Caco-2 (cell line): ENCODE measurements at regions of chr10 and their contacts with region 1.

Region 1: DNA sequence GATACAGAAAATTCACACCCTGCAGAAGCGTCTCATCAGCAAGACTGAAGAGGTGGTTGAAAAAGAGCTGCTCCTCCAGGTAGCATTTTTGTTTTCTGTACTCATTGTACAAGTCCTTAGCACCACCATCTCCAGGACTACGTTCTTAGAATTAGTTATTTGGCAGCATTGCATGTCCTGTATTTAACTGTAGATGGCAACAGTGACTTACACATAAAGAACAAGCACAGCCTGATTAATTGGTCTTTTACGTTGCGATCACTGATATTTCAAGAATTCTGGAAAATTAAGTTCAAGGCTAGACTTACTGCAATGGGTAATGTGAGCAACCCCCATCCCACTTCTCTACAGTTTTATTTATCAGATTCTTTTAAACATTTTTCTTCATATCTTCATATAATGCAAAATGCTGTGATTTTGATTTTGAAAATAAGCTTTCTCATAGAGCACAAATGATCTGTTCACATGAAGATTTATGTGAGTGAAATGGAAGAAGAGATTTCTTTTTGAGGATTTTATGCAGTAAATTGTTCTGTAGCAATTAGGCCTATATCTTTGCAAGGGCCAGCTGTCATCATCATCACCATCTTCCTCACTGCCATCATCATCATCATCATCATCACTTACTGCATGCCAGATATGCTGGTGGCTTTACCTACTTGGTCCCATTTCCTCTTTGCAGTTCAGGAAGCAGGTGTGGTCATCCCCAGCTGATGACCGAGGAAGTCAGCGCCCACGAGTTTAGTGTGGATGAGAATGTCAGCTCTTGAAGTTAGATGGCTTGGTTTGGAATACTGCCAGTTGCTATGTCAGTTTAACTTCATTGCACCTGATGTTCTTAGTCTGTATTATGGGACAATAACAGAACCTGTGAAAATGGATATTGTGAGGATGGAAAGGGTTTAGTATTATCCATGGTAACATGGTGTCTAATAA is 53.4 kb downstream of the CFAP58 start:
- DNase-seq: peak in 1 of 2 experiments; percentile 9
- H3K4me3 ChIP-seq: no peak overlapping the region
- H3K4me3 Mint-ChIP-seq: no peak overlapping the region
- H3K27ac Mint-ChIP-seq: no peak overlapping the region
- H3K4me1 ChIP-seq: no peaks in the 10 kb centered on the region
- H3K4me1 Mint-ChIP-seq: no peaks in the 10 kb centered on the region
- H3K27me3 ChIP-seq: no peaks in the 10 kb centered on the region; the same call in 1 of the 2 replicates
- H3K27me3 Mint-ChIP-seq: peaks cover 29% of the 10 kb centered on the region
- CTCF ChIP-seq: peak; percentile 38 to 39

Region 2: GRCh38 chr10:104614245-104614831 is 207.4 kb after region 1 on chr10:
- CTCF ChIA-PET with region 1: no interaction called
- POLR2A ChIA-PET with region 1: no interaction called
- intact Hi-C with region 1: loop called (anchors 1 kb)
- DNase-seq: peak in 1 of 2 experiments; percentile 47
- H3K4me3 ChIP-seq: no peak overlapping the region
- H3K4me3 Mint-ChIP-seq: no peak overlapping the region
- H3K27ac Mint-ChIP-seq: no peak overlapping the region
- H3K4me1 ChIP-seq: no peaks in the 10 kb centered on the region
- H3K4me1 Mint-ChIP-seq: no peaks in the 10 kb centered on the region
- H3K27me3 ChIP-seq: no peaks in the 10 kb centered on the region
- H3K27me3 Mint-ChIP-seq: no peaks in the 10 kb centered on the region
- CTCF ChIP-seq: peak; percentile 36 to 66

Region 3: DNA sequence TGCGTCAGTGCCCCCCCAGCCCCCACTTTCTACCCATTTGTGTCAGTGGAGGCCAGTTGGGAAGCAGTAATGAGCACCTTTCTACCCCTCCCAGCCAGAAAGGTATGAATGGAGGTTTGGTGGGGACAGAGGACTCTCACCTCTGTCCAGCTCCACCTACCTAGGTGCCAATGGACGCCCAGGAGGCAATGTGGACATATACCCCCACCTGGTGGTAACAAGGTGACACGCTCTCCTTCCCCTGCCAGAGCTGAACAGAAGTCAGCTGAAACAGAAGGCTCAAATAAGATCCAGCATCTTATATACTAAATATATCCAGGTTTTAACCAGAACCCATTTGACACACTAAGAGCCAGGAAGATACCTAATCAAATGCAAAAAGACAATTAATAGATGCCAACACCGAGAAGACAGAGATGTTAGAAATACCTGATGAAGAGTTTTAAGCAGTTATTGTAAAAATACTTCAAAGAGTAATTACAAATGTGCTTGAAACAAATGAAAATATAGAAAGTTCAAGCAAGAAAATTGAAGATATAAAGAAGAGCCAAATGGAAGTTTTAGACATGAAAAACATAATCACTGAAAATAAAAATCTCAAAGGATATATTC is 215.7 kb after region 1 on chr10:
- CTCF ChIA-PET with region 1: interaction called, 6 read pairs
- POLR2A ChIA-PET with region 1: no interaction called
- intact Hi-C with region 1: loop called (anchors 1 kb)
- DNase-seq: peak; percentile 59 to 71
- H3K4me3 ChIP-seq: no peak overlapping the region
- H3K4me3 Mint-ChIP-seq: no peak overlapping the region
- H3K27ac Mint-ChIP-seq: no peak overlapping the region
- H3K4me1 ChIP-seq: no peaks in the 10 kb centered on the region
- H3K4me1 Mint-ChIP-seq: no peaks in the 10 kb centered on the region
- H3K27me3 ChIP-seq: no peaks in the 10 kb centered on the region
- H3K27me3 Mint-ChIP-seq: peaks cover 23% of the 10 kb centered on the region
- CTCF ChIP-seq: peak; percentile 73 to 85

Region 4: DNA sequence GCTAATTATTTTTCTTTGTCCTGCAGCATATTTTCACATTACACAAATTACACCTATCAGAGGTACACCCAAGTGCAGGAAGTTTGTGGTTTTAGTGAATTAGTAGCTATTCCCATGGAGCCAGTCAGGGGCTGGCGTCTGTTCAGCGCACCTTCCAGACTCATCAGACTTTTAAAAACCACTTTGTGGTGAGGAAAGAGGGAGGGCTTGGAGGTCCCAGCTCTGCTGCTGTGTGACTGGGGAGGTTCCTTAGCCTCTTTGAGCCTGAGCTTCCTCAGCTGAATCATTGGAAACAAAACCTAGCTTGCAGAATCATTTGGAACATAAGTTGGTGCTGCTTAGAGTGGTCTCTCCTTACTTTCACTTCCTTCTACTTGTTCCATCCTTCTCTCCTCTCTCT is 409.5 kb after region 1 on chr10:
- CTCF ChIA-PET with region 1: no interaction called
- POLR2A ChIA-PET with region 1: no interaction called
- intact Hi-C with region 1: no loop called
- DNase-seq: no peak
- H3K4me3 ChIP-seq: no peak overlapping the region
- H3K4me3 Mint-ChIP-seq: no peak overlapping the region
- H3K27ac Mint-ChIP-seq: no peak overlapping the region
- H3K4me1 ChIP-seq: no peaks in the 10 kb centered on the region
- H3K4me1 Mint-ChIP-seq: no peaks in the 10 kb centered on the region
- H3K27me3 ChIP-seq: no peaks in the 10 kb centered on the region
- H3K27me3 Mint-ChIP-seq: peaks cover 8% of the 10 kb centered on the region
- CTCF ChIP-seq: no peak